AG04450 (cell line): ENCODE measurements at regions of chr10 and their contacts with region 1.

Region 1: GRCh38 chr10:104406715-104407650 is 53.4 kb downstream of the CFAP58 start:
- DNase-seq: peak; percentile 3
- H3K4me3 ChIP-seq: no peak overlapping the region
- H3K27ac ChIP-seq: no peak overlapping the region
- H3K27me3 ChIP-seq: no peaks in the 10 kb centered on the region
- CTCF ChIP-seq: peak; percentile 71

Region 2: DNA sequence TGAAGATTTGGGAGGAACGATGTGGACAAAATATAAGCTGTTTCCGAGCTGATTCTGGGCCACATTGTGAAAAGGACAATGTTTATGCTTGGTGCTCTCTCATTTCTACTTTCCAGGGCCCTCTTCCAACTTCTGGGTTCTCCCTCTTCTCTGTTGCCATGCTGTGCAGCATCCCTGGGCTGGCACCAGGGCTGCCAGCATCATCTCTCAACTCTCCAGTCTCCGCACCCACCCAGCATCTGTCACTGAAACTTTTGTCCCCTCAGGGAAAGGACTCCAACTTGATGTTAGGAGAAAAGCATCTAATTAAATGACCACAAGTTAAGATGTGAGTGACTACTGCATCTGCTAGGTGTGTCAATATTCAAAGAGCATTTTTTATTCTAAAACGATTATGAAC is 26.6 kb before region 1 on chr10:
- CTCF ChIA-PET with region 1: no interaction called
- POLR2A ChIA-PET with region 1: no interaction called
- DNase-seq: no peak
- H3K4me3 ChIP-seq: no peak overlapping the region
- H3K27ac ChIP-seq: no peak overlapping the region
- H3K27me3 ChIP-seq: no peaks in the 10 kb centered on the region
- CTCF ChIP-seq: no peak

Region 3: GRCh38 chr10:104614245-104614831 is 207.4 kb after region 1 on chr10:
- CTCF ChIA-PET with region 1: interaction called, 22 read pairs
- POLR2A ChIA-PET with region 1: no interaction called
- DNase-seq: no peak
- H3K4me3 ChIP-seq: no peak overlapping the region
- H3K27ac ChIP-seq: no peak overlapping the region
- H3K27me3 ChIP-seq: no peaks in the 10 kb centered on the region
- CTCF ChIP-seq: peak; percentile 60

Region 4: DNA sequence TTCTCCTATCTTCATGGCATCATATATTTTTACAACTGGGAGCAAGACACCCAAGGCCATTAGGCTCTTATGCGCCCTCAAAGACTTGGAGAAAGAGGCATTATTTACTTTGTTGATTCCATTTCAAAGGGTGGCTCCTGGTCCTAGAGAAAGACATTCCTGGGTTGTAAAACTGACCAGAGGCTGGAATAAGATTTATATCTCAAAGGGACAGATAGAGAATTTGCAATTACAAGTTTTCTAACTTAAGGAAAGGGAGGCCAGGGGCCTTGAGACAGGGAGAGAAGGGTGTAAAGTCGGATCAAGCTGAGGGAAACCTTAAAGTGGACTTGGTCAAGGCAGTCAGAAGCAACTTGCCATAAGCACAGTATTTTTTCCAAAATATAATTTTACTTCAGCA is 1320.1 kb after region 1 on chr10:
- CTCF ChIA-PET with region 1: no interaction called
- POLR2A ChIA-PET with region 1: no interaction called
- DNase-seq: no peak
- H3K4me3 ChIP-seq: no peak overlapping the region
- H3K27ac ChIP-seq: no peak overlapping the region
- H3K27me3 ChIP-seq: no peaks in the 10 kb centered on the region
- CTCF ChIP-seq: no peak